IMR-90 (cell line): ENCODE measurements at regions of chr2 and their contacts with region 1.

Region 1: GRCh38 chr2:43637030-43637803 is at the start of gene PLEKHH2:
- DNase-seq: peak; percentile 83
- ATAC-seq: peak; percentile 99
- H3K4me3 ChIP-seq: peak within 1 kb of the TSS; percentile 73
- H3K27ac ChIP-seq: peak within 1 kb of the TSS; percentile 35
- H3K4me1 ChIP-seq: peaks cover 7% of the 10 kb centered on the region; the same call in 1 of the 2 replicates
- H3K27me3 ChIP-seq: peaks cover 10% of the 10 kb centered on the region
- CTCF ChIP-seq: no peak
- POLR2A ChIP-seq: no peak; the same call in 1 of the 2 replicates
- RAD21 ChIP-seq: no peak
- total RNA-seq, gene PLEKHH2: 1.7 and 2.0 TPM in 2 replicates

Region 2: GRCh38 chr2:43444989-43445645 is 192.1 kb before region 1 on chr2:
- CTCF ChIA-PET with region 1: no interaction called
- POLR2A ChIA-PET with region 1: no interaction called
- dilution Hi-C with region 1: no loop called
- in situ Hi-C with region 1: no loop called
- intact Hi-C with region 1: no loop called
- DNase-seq: no peak
- ATAC-seq: no peak
- H3K4me3 ChIP-seq: no peak overlapping the region
- H3K27ac ChIP-seq: no peak overlapping the region
- H3K4me1 ChIP-seq: peaks cover 2% of the 10 kb centered on the region; the same call in 1 of the 2 replicates
- H3K27me3 ChIP-seq: no peaks in the 10 kb centered on the region
- CTCF ChIP-seq: no peak
- POLR2A ChIP-seq: no peak
- RAD21 ChIP-seq: no peak

Region 3: GRCh38 chr2:43685357-43685756 is 48.1 kb after region 1 on chr2:
- CTCF ChIA-PET with region 1: interaction called, 3 read pairs
- POLR2A ChIA-PET with region 1: no interaction called
- dilution Hi-C with region 1: no loop called
- in situ Hi-C with region 1: loop called (anchors 5 kb)
- intact Hi-C with region 1: no loop called
- DNase-seq: no peak
- ATAC-seq: peak; percentile 35; the same call in 1 of the 2 replicates
- H3K4me3 ChIP-seq: no peak overlapping the region
- H3K27ac ChIP-seq: no peak overlapping the region
- H3K4me1 ChIP-seq: 0 out of 2 replicates have a peak, but pooled peaks cover 3% of the 10 kb centered on the region
- H3K27me3 ChIP-seq: no peaks in the 10 kb centered on the region; the same call in 1 of the 2 replicates
- CTCF ChIP-seq: no peak
- POLR2A ChIP-seq: no peak
- RAD21 ChIP-seq: no peak